ENCODE measurements at regions of chr4 and their contacts with region 1.

Region 1: DNA sequence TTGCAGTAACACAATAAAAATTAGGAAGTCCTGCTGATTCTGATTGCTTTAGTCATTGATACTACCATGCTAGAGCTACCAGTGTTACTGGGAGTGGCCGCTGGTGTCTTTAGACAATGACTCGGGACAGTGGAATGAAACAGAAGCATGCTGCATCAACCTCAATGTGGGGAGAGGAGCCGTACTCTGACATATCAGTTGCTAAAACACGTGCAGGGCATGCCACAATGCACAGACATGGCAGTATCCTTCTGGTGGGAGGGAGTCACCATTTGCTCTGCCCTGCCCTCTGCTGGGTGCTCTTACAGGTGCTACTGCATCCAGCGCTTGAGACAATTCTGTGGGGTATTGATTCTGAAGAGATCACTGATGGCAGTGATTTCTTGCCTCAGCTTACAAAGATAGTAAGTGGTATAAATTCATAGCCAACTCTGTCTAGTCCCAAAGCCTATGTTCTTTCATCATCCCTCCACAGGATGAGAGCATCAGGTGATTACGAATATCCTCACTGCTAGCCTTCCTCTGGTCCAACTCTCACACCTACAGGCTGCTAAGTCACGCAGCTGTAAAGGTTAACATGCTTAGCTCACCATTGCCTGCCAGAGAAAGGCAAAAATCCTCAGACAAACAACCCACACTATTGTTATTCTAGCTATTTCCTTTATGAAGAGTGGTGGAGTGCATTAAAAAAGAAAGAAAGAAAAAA is 43.7 kb downstream of the NSG1 start:
- DNase-seq: peak; percentile 21 to 74 (median 59)
- ATAC-seq: peak; percentile 99
- H3K4me3 ChIP-seq: no peak overlapping the region
- H3K4me3 Mint-ChIP-seq: no peak overlapping the region
- H3K27ac ChIP-seq: no peak overlapping the region
- H3K27ac Mint-ChIP-seq: peak overlapping the region; percentile 52
- H3K4me1 ChIP-seq: peaks cover 6% of the 10 kb centered on the region
- H3K4me1 Mint-ChIP-seq: peaks cover 4% of the 10 kb centered on the region
- H3K27me3 ChIP-seq: no peaks in the 10 kb centered on the region
- H3K27me3 Mint-ChIP-seq: no peaks in the 10 kb centered on the region
- CTCF ChIP-seq: peak; percentile 72

Region 2: DNA sequence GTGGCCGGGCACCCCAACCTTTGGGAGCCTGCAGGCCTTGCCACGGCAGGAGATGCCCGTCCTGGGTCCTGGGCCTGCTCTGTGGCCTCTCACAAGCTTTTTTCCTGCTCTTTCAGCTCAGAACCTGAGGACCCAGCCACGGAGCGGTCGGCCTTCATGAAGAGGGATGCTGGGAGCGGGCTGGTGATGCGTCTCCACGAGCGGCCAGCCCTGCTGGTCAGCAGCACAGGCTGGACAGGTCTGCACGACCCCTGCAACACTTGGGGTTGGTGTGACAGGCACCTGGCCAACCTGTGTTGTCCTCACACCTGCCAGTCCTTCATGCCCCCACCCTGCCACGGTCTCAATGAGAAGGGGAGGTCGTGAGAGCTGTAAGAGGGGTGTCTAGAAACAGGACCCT is 494.5 kb before region 1 on chr4:
- CTCF ChIA-PET with region 1: no interaction called
- POLR2A ChIA-PET with region 1: no interaction called
- intact Hi-C with region 1: no loop called
- DNase-seq: no peak
- ATAC-seq: no peak
- H3K4me3 ChIP-seq: no peak overlapping the region
- H3K4me3 Mint-ChIP-seq: no peak overlapping the region
- H3K27ac ChIP-seq: no peak overlapping the region
- H3K27ac Mint-ChIP-seq: no peak overlapping the region
- H3K4me1 ChIP-seq: no peaks in the 10 kb centered on the region
- H3K4me1 Mint-ChIP-seq: no peaks in the 10 kb centered on the region
- H3K27me3 ChIP-seq: no peaks in the 10 kb centered on the region
- H3K27me3 Mint-ChIP-seq: peaks cover 9% of the 10 kb centered on the region
- CTCF ChIP-seq: no peak

Region 3: GRCh38 chr4:4269856-4270255 is 160.8 kb before region 1 on chr4:
- CTCF ChIA-PET with region 1: interaction called, 17 read pairs
- POLR2A ChIA-PET with region 1: no interaction called
- intact Hi-C with region 1: no loop called
- DNase-seq: peak in 6 of 9 experiments; percentile 39 to 81 (median 70)
- ATAC-seq: peak; percentile 77
- H3K4me3 ChIP-seq: no peak overlapping the region
- H3K4me3 Mint-ChIP-seq: peak overlapping the region; percentile 77
- H3K27ac ChIP-seq: peak overlapping the region; percentile 81 to 90
- H3K27ac Mint-ChIP-seq: peak overlapping the region; percentile 95
- H3K4me1 ChIP-seq: peaks cover 22% of the 10 kb centered on the region
- H3K4me1 Mint-ChIP-seq: peaks cover 52% of the 10 kb centered on the region
- H3K27me3 ChIP-seq: no peaks in the 10 kb centered on the region
- H3K27me3 Mint-ChIP-seq: no peaks in the 10 kb centered on the region
- CTCF ChIP-seq: no peak

Region 4: DNA sequence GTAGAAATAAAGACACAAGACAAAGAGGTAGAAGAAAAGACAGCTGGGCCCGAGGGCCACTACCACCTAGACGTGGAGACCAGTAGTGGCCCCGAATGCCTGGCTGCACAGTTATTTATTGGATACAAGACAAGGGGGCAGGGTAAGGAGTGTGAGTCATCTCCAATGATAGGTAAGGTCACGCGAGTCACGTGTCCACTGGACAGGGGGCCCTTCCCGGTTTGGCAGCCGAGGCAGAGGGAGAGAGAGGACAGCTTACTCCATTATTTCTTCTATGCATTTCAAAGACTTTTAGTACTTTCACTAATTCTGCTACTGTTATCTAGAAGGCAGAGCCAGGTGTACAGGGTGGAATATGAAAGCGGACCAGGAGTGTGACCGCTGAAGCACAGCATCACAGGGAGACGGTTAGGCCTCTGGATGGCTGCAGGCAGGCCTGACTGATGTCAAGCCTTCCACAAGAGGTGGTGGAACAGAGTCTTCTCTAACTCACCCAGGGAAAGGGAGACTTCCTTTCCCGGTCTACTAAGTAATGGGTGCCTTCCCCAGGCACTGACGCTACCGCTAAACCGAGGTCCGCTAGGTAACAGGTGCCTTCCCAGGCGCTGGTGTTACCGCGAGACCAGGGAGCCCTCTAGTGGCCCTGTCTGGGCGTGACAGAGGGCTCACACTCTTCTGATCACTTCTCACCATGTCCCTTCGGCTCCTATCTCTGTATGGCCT is 95.7 kb before region 1 on chr4:
- CTCF ChIA-PET with region 1: interaction called, 18 read pairs
- POLR2A ChIA-PET with region 1: interaction called, 3 read pairs
- intact Hi-C with region 1: loop called (anchors 1 to 2 kb)
- DNase-seq: peak; percentile 55 to 88 (median 77)
- ATAC-seq: peak; percentile 100
- H3K4me3 ChIP-seq: no peak overlapping the region
- H3K4me3 Mint-ChIP-seq: peak overlapping the region; percentile 43
- H3K27ac ChIP-seq: no peak overlapping the region
- H3K27ac Mint-ChIP-seq: peak overlapping the region; percentile 49
- H3K4me1 ChIP-seq: peaks cover 6% of the 10 kb centered on the region
- H3K4me1 Mint-ChIP-seq: peaks cover 17% of the 10 kb centered on the region
- H3K27me3 ChIP-seq: no peaks in the 10 kb centered on the region
- H3K27me3 Mint-ChIP-seq: no peaks in the 10 kb centered on the region
- CTCF ChIP-seq: peak; percentile 65

Region 5: GRCh38 chr4:4386736-4387392 is 43.8 kb before region 1 on chr4 and contains the start of gene NSG1:
- CTCF ChIA-PET with region 1: interaction called, 6 read pairs
- POLR2A ChIA-PET with region 1: interaction called, 3 read pairs
- intact Hi-C with region 1: loop called in 1 of 2 experiments (anchors 1 kb)
- DNase-seq: peak in 8 of 9 experiments; percentile 29 to 72 (median 53)
- ATAC-seq: peak; percentile 66
- H3K4me3 ChIP-seq: peak within 1 kb of the TSS; percentile 58 to 76
- H3K4me3 Mint-ChIP-seq: peak within 1 kb of the TSS; percentile 93
- H3K27ac ChIP-seq: peak within 1 kb of the TSS; percentile 30 to 35
- H3K27ac Mint-ChIP-seq: peak within 1 kb of the TSS; percentile 82
- H3K4me1 ChIP-seq: peaks cover 14% of the 10 kb centered on the region
- H3K4me1 Mint-ChIP-seq: peaks cover 25% of the 10 kb centered on the region
- H3K27me3 ChIP-seq: no peaks in the 10 kb centered on the region
- H3K27me3 Mint-ChIP-seq: peaks cover 7% of the 10 kb centered on the region
- CTCF ChIP-seq: no peak
- total RNA-seq, gene NSG1: 14.2 to 15.8 TPM

Region 6: DNA sequence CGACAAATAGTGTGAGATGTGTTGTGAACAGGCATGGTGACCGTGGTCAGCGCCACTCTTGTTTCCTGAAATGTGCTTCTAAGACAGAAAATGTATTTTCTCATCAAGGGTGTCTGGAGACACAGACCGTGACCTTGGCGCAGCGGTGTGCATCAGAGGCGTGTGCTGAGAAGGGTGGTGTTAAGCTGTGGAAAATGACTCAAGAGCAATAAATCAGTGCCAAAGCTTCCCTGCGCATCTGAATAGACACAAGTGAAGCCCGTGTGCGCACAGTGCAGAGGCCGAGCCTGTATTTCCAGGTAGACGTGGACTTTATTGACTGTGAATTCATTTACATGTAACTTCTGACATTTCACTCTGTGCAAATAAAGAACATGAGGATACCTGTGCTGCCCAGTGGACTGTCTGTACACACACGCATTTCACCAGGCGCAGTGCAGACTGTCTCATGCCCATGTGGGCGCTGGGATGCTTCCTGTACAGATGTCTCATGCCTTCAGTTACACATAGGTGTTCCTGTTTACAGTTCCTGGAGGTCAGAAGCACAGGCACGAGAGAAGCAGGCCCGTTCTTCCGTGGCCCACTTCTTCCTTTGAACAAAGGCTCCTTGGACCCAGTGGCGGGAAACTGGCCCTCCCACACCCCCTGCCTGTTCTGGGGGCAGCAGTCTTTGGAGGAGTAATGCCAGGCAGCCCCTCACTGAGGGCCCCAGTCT is 11.8 kb before region 1 on chr4:
- CTCF ChIA-PET with region 1: interaction called, 19 read pairs
- POLR2A ChIA-PET with region 1: no interaction called
- intact Hi-C with region 1: no loop called
- DNase-seq: peak in 1 of 9 experiments; percentile 13
- ATAC-seq: peak; percentile 59
- H3K4me3 ChIP-seq: peak overlapping the region in 1 of 2 experiments; percentile 2
- H3K4me3 Mint-ChIP-seq: peak overlapping the region; percentile 61
- H3K27ac ChIP-seq: peak overlapping the region in 1 of 2 experiments; percentile 21
- H3K27ac Mint-ChIP-seq: peak overlapping the region; percentile 84
- H3K4me1 ChIP-seq: peaks cover 19% of the 10 kb centered on the region
- H3K4me1 Mint-ChIP-seq: peaks cover 40% of the 10 kb centered on the region
- H3K27me3 ChIP-seq: no peaks in the 10 kb centered on the region
- H3K27me3 Mint-ChIP-seq: no peaks in the 10 kb centered on the region
- CTCF ChIP-seq: no peak

Region 7: GRCh38 chr4:5619913-5620625 is 1189.4 kb after region 1 on chr4:
- CTCF ChIA-PET with region 1: no interaction called
- POLR2A ChIA-PET with region 1: no interaction called
- intact Hi-C with region 1: no loop called
- DNase-seq: no peak
- ATAC-seq: no peak
- H3K4me3 ChIP-seq: no peak overlapping the region
- H3K4me3 Mint-ChIP-seq: no peak overlapping the region
- H3K27ac ChIP-seq: no peak overlapping the region
- H3K27ac Mint-ChIP-seq: no peak overlapping the region
- H3K4me1 ChIP-seq: no peaks in the 10 kb centered on the region
- H3K4me1 Mint-ChIP-seq: no peaks in the 10 kb centered on the region
- H3K27me3 ChIP-seq: no peaks in the 10 kb centered on the region
- H3K27me3 Mint-ChIP-seq: no peaks in the 10 kb centered on the region
- CTCF ChIP-seq: no peak